ENCODE measurements at regions of chr5 and their contacts with region 1.

Region 1: GRCh38 chr5:91272858-91273257 is 110.3 kb downstream of the ARRDC3 start:
- DNase-seq: no peak
- ATAC-seq: no peak
- H3K4me3 ChIP-seq: no peak overlapping the region
- H3K27ac ChIP-seq: no peak overlapping the region
- H3K4me1 ChIP-seq: no peaks in the 10 kb centered on the region
- H3K27me3 ChIP-seq: no peaks in the 10 kb centered on the region
- CTCF ChIP-seq: no peak

Region 2: GRCh38 chr5:91235271-91235694 is 37.6 kb before region 1 on chr5:
- intact Hi-C with region 1: loop called in 1 of 2 experiments (anchors 5 kb)
- DNase-seq: no peak
- ATAC-seq: no peak
- H3K4me3 ChIP-seq: no peak overlapping the region
- H3K27ac ChIP-seq: no peak overlapping the region
- H3K4me1 ChIP-seq: no peaks in the 10 kb centered on the region
- H3K27me3 ChIP-seq: no peaks in the 10 kb centered on the region
- CTCF ChIP-seq: no peak

Region 3: GRCh38 chr5:91255396-91256141 is 17.3 kb before region 1 on chr5:
- intact Hi-C with region 1: no loop called
- DNase-seq: no peak
- ATAC-seq: no peak
- H3K4me3 ChIP-seq: no peak overlapping the region
- H3K27ac ChIP-seq: no peak overlapping the region
- H3K4me1 ChIP-seq: peaks cover 2% of the 10 kb centered on the region
- H3K27me3 ChIP-seq: no peaks in the 10 kb centered on the region
- CTCF ChIP-seq: no peak

Measured in psoas muscle (tissue), 8 donors.